Activated naive CD4-positive, alpha-beta T cell treated with anti-CD3 and anti-CD28 coated beads for 36 hours (primary cell): ENCODE measurements at regions of chr16 and their contacts with region 1.

Region 1: DNA sequence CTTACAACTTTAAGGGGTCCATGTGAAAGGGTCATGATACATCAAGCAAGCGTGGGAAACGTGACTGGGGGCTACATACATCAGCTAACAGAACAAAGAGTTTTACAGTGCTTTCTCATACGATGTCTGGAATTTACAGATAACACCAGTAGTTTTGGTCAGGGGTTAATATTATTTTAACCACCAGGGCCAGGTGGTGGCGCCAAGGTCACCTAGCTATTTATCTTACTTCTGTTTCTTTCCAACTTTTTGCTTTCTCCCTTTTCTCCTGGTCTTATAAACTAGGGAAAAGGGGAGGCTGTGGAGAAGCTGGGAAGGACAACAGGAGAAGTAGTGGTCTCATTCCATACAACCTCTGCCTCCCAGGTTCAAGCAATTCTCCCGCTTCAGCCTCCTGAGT is 37.9 kb downstream of the CLEC3A start:
- DNase-seq: no peak
- H3K4me3 Mint-ChIP-seq: no peak overlapping the region
- H3K27ac Mint-ChIP-seq: no peak overlapping the region
- H3K4me1 Mint-ChIP-seq: no peaks in the 10 kb centered on the region
- H3K27me3 Mint-ChIP-seq: no peaks in the 10 kb centered on the region

Region 2: GRCh38 chr16:78099372-78100161 is 39.3 kb after region 1 on chr16 and contains the start of gene WWOX:
- CTCF ChIA-PET with region 1: interaction called, 4 read pairs
- intact Hi-C with region 1: loop called (anchors 1 kb)
- DNase-seq: peak; percentile 95
- H3K4me3 Mint-ChIP-seq: peak within 1 kb of the TSS; percentile 84
- H3K27ac Mint-ChIP-seq: peak within 1 kb of the TSS; percentile 88
- H3K4me1 Mint-ChIP-seq: peaks cover 24% of the 10 kb centered on the region
- H3K27me3 Mint-ChIP-seq: peaks cover 3% of the 10 kb centered on the region
- total RNA-seq, gene WWOX: 20.2 to 21.4 TPM